GM12878 (cell line): ENCODE measurements at regions of chr4 and their contacts with region 1.

Region 1: GRCh38 chr4:115851918-115852766 is 738.7 kb upstream of the NDST4 start:
- DNase-seq: peak; percentile 19
- ATAC-seq: peak; percentile 88
- H3K4me3 ChIP-seq: no peak overlapping the region
- H3K27ac ChIP-seq: no peak overlapping the region
- H3K4me1 ChIP-seq: peaks cover 9% of the 10 kb centered on the region
- H3K27me3 ChIP-seq: no peaks in the 10 kb centered on the region
- CTCF ChIP-seq: peak; percentile 72 to 74 (median 72)
- EP300 ChIP-seq: no peak
- POLR2A ChIP-seq: no peak
- RAD21 ChIP-seq: peak; percentile 76

Region 2: DNA sequence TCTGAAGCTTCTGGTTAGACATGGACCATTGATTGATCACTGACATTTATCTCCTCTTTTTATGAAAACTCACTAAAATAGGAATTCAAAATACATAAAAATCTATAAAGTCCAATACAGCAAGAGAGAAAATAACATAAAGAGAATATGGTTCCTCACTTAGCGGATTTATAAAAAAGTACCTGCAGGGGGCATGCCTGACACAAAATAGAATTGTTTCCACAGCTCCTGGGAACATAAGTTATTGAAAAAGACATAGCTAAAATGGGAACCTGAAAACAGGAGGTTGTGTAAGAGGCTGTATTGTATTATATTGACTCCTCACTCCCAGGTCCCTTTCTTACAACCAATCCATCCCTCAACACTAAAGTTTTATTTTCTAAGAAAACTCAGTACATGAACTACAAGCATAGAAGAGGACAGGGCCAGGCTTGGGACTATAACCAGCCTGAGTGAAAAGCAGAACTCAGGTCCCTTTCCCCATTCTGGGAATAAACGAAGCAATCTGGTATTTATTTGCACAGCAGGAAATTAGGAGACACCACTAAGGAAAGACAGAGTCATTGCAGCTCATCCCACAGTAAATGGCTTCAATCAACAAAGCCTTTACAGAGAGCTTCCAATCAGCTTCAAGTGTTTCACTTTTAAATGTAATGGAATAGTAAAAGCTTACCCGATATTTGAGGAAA is 617.6 kb before region 1 on chr4:
- CTCF ChIA-PET with region 1: interaction called, 80 read pairs
- POLR2A ChIA-PET with region 1: no interaction called
- RAD21 ChIA-PET with region 1: interaction called, 69 read pairs
- SMC1A ChIA-PET with region 1: interaction called, 52 read pairs
- in situ Hi-C with region 1: no loop called
- intact Hi-C with region 1: loop called (anchors 1 kb)
- DNase-seq: peak; percentile 12
- ATAC-seq: peak; percentile 88
- H3K4me3 ChIP-seq: no peak overlapping the region
- H3K27ac ChIP-seq: no peak overlapping the region
- H3K4me1 ChIP-seq: no peaks in the 10 kb centered on the region
- H3K27me3 ChIP-seq: no peaks in the 10 kb centered on the region
- CTCF ChIP-seq: peak; percentile 24 to 60 (median 27); a peak in 4 of 6 replicates
- EP300 ChIP-seq: no peak
- POLR2A ChIP-seq: no peak
- RAD21 ChIP-seq: peak; percentile 66

Region 3: GRCh38 chr4:115334736-115335411 is 517.3 kb before region 1 on chr4:
- CTCF ChIA-PET with region 1: no interaction called
- POLR2A ChIA-PET with region 1: no interaction called
- RAD21 ChIA-PET with region 1: no interaction called
- SMC1A ChIA-PET with region 1: no interaction called
- in situ Hi-C with region 1: no loop called
- intact Hi-C with region 1: no loop called
- DNase-seq: peak; percentile 34
- ATAC-seq: peak; percentile 73
- H3K4me3 ChIP-seq: no peak overlapping the region
- H3K27ac ChIP-seq: no peak overlapping the region
- H3K4me1 ChIP-seq: peaks cover 9% of the 10 kb centered on the region; the same call in 1 of the 2 replicates
- H3K27me3 ChIP-seq: no peaks in the 10 kb centered on the region
- CTCF ChIP-seq: no peak
- EP300 ChIP-seq: no peak; a peak in 1 of 4 replicates
- POLR2A ChIP-seq: no peak
- RAD21 ChIP-seq: no peak

Region 4: DNA sequence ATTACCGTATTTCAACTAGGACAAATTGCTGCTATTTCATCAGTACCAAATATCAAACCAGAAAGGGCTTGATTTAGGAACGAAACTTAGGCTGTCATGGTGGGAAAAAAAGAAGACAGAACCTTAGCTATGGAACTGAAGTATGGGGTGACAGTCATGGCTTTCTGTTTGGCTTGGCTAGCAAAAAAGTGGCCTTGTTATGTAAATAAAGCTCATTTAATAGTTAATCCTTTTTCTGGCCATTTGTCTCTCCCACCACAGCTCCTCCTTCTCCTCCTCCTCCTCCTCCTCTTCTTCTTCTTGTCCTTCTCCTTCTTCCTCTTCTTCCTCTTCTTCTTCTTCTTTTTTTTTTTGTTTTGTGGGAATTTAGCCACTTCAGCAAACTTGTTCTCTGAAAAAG is 304.0 kb before region 1 on chr4:
- CTCF ChIA-PET with region 1: interaction called, 10 read pairs
- POLR2A ChIA-PET with region 1: no interaction called
- RAD21 ChIA-PET with region 1: no interaction called
- SMC1A ChIA-PET with region 1: interaction called, 4 read pairs
- in situ Hi-C with region 1: no loop called
- intact Hi-C with region 1: no loop called
- DNase-seq: no peak
- ATAC-seq: no peak
- H3K4me3 ChIP-seq: no peak overlapping the region
- H3K27ac ChIP-seq: no peak overlapping the region
- H3K4me1 ChIP-seq: no peaks in the 10 kb centered on the region
- H3K27me3 ChIP-seq: 0 out of 4 replicates have a peak, but pooled peaks cover 0 to 1% of the 10 kb centered on the region in 2 experiments
- CTCF ChIP-seq: no peak
- EP300 ChIP-seq: no peak
- POLR2A ChIP-seq: no peak
- RAD21 ChIP-seq: no peak

Region 5: DNA sequence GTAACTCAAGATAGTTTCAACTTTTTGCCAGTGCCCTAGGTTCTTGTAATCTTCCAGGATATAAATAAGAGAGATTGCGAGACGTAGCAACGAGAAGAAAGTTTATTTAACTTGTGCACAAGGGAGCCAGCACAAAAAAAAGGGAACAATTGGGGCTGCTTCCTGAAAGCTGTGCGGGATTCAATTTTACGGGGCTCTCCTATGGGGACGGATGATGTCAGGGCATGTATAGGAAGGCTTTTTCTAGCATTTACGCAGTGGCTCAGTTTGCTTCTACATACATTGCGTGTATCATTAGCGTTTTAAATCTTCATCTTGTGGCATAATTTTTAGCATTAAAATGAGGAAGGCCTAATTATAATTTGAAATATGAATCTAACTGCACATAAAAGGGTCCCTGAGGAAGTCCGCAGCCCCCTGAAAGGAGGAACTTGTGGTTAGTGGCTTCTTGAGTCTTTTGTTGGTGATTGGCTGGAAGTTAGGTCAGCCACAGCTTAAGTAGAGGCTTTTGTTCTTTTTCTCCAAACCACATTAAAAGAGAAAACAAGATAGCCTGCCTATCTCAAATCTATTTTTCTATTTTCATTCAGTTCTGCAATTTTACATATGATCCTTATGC is 70.5 kb before region 1 on chr4:
- CTCF ChIA-PET with region 1: interaction called, 15 read pairs
- POLR2A ChIA-PET with region 1: no interaction called
- RAD21 ChIA-PET with region 1: interaction called, 6 read pairs
- SMC1A ChIA-PET with region 1: interaction called, 6 read pairs
- in situ Hi-C with region 1: no loop called
- intact Hi-C with region 1: loop called (anchors 2 kb)
- DNase-seq: peak; percentile 25
- ATAC-seq: peak; percentile 82
- H3K4me3 ChIP-seq: peak overlapping the region; percentile 21; the same call in 1 of the 2 replicates
- H3K27ac ChIP-seq: no peak overlapping the region; the same call in 1 of the 2 replicates
- H3K4me1 ChIP-seq: no peaks in the 10 kb centered on the region
- H3K27me3 ChIP-seq: no peaks in the 10 kb centered on the region
- CTCF ChIP-seq: no peak
- EP300 ChIP-seq: no peak; a peak in 2 of 4 replicates
- POLR2A ChIP-seq: no peak
- RAD21 ChIP-seq: no peak

Region 6: DNA sequence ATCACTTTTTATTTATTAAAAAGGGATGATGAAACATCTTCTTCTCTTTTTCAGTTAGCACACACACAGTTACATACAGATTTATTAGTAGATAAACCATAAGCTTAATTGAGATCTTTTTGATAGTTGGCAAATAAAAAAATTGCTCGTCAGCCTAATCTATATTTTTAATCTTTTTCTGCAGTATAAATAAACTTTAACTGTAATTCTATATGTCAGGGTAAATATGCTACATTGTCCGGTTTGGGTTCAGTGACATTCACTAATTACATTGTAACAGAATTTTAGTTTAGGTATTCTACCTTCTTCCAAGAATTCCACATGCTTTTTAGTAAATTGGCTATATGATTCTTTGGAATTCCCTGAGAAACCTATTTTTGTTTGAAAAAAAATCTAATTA is 56.0 kb before region 1 on chr4:
- CTCF ChIA-PET with region 1: interaction called, 11 read pairs
- POLR2A ChIA-PET with region 1: no interaction called
- RAD21 ChIA-PET with region 1: interaction called, 8 read pairs
- SMC1A ChIA-PET with region 1: interaction called, 3 read pairs
- in situ Hi-C with region 1: no loop called
- intact Hi-C with region 1: no loop called
- DNase-seq: no peak
- ATAC-seq: no peak
- H3K4me3 ChIP-seq: no peak overlapping the region
- H3K27ac ChIP-seq: no peak overlapping the region
- H3K4me1 ChIP-seq: no peaks in the 10 kb centered on the region
- H3K27me3 ChIP-seq: no peaks in the 10 kb centered on the region
- CTCF ChIP-seq: no peak
- EP300 ChIP-seq: no peak
- POLR2A ChIP-seq: no peak
- RAD21 ChIP-seq: no peak

Region 7: GRCh38 chr4:115865736-115866135 is 13.6 kb after region 1 on chr4:
- CTCF ChIA-PET with region 1: interaction called, 19 read pairs
- POLR2A ChIA-PET with region 1: no interaction called
- RAD21 ChIA-PET with region 1: interaction called, 3 read pairs
- SMC1A ChIA-PET with region 1: interaction called, 10 read pairs
- in situ Hi-C with region 1: no loop called
- intact Hi-C with region 1: no loop called
- DNase-seq: no peak
- ATAC-seq: no peak
- H3K4me3 ChIP-seq: no peak overlapping the region
- H3K27ac ChIP-seq: no peak overlapping the region
- H3K4me1 ChIP-seq: no peaks in the 10 kb centered on the region
- H3K27me3 ChIP-seq: no peaks in the 10 kb centered on the region
- CTCF ChIP-seq: no peak
- EP300 ChIP-seq: no peak
- POLR2A ChIP-seq: no peak
- RAD21 ChIP-seq: no peak